ENCODE measurements at regions of chr7 and their contacts with region 1.

Region 1: DNA sequence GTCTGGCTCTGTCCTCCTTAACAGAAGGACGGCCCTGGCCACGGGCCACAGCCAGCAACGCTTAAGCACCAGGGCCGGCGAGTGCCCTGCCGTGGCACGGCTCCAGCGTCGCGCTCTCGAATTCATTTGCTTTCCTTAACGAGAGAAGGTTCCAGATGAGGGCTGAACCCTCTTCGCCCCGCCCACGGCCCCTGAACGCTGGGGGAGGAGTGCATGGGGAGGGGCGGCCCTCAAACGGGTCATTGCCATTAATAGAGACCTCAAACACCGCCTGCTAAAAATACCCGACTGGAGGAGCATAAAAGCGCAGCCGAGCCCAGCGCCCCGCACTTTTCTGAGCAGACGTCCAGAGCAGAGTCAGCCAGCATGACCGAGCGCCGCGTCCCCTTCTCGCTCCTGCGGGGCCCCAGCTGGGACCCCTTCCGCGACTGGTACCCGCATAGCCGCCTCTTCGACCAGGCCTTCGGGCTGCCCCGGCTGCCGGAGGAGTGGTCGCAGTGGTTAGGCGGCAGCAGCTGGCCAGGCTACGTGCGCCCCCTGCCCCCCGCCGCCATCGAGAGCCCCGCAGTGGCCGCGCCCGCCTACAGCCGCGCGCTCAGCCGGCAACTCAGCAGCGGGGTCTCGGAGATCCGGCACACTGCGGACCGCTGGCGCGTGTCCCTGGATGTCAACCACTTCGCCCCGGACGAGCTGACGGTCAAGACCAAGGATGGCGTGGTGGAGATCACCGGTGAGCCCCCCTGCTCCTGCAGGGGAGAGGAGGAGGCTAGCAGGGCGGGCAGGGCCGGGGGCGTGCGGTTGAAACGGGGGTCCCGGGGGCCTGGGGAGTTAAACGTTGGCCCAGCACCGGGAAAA is at the start of gene HSPB1:
- DNase-seq: peak; percentile 83
- ATAC-seq: peak; percentile 32
- H3K4me3 Mint-ChIP-seq: peak within 1 kb of the TSS; percentile 82
- H3K27ac Mint-ChIP-seq: peak within 1 kb of the TSS; percentile 97
- H3K4me1 Mint-ChIP-seq: peaks cover 23% of the 10 kb centered on the region
- H3K27me3 Mint-ChIP-seq: peaks cover 24% of the 10 kb centered on the region
- CTCF ChIP-seq: no peak
- total RNA-seq, gene HSPB1: 202 to 299 TPM (median 285 TPM) in 3 replicates

Region 2: GRCh38 chr7:76225379-76225778 is 77.2 kb before region 1 on chr7:
- CTCF ChIA-PET with region 1: no interaction called
- POLR2A ChIA-PET with region 1: no interaction called
- DNase-seq: peak; percentile 82
- ATAC-seq: peak; percentile 69
- H3K4me3 Mint-ChIP-seq: no peak overlapping the region
- H3K27ac Mint-ChIP-seq: no peak overlapping the region
- H3K4me1 Mint-ChIP-seq: peaks cover 40% of the 10 kb centered on the region
- H3K27me3 Mint-ChIP-seq: no peaks in the 10 kb centered on the region; the same call in 1 of the 2 replicates
- CTCF ChIP-seq: no peak

Region 3: DNA sequence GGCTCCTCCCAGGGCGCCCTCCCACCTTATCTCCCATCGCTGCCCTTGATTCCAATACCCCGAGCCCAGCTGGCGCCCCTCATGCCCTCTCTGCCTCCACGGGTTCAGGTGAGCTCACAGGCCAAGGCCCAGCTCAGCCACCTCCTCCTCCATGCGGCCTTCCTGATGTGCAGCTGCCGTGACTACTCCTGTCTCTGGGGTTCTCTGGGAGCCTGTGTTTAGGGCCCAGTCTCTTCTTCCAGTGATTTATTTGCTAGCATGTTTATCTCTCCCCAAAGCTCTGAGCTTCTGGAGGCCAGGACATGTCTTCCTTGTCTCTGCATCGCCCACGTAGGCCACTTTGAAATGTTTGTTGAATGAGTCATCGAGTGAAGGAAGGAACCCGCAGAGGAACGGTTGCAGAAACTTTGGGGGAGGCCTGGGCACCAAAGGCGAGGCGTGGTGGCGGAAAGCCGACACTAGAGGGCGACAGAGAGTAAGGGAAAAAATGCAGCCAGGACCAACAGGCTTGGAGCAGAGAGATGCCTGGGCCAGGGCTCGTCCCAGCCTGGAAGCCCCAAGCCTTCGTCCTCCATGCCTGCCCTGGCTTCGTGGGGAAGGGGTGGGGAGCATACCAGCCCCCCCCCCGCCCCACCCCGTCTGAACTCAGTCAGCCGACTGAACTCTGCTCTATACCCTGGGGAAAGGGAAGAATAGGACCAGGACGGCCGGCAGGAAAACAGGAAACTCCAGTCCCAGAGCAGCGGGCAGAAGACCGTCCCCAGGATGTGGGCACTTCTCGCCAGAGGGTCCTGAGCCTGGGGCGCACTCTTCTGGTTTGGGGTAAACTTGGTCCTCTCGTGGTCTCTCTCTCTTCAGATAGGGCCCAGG is 11.0 kb before region 1 on chr7:
- CTCF ChIA-PET with region 1: interaction called, 28 read pairs
- POLR2A ChIA-PET with region 1: interaction called, 3 read pairs
- DNase-seq: peak; percentile 93
- ATAC-seq: peak; percentile 79
- H3K4me3 Mint-ChIP-seq: no peak overlapping the region
- H3K27ac Mint-ChIP-seq: peak overlapping the region; percentile 96
- H3K4me1 Mint-ChIP-seq: peaks cover 39% of the 10 kb centered on the region
- H3K27me3 Mint-ChIP-seq: peaks cover 3% of the 10 kb centered on the region
- CTCF ChIP-seq: peak; percentile 97

Measured in WTC11 (cell line).